ENCODE measurements at regions of chr10 and their contacts with region 1.

Region 1: GRCh38 chr10:70355051-70356021 is 27.1 kb downstream of the LRRC20 start:
- DNase-seq: peak; percentile 40
- ATAC-seq: peak; percentile 77
- H3K4me3 Mint-ChIP-seq: peak overlapping the region; percentile 64
- H3K27ac Mint-ChIP-seq: peak overlapping the region; percentile 73
- H3K4me1 Mint-ChIP-seq: peaks cover 20% of the 10 kb centered on the region
- H3K27me3 Mint-ChIP-seq: no peaks in the 10 kb centered on the region
- CTCF ChIP-seq: no peak

Region 2: GRCh38 chr10:70191972-70192305 is 163.4 kb before region 1 on chr10:
- CTCF ChIA-PET with region 1: no interaction called
- POLR2A ChIA-PET with region 1: no interaction called
- intact Hi-C with region 1: no loop called
- DNase-seq: no peak
- ATAC-seq: no peak
- H3K4me3 Mint-ChIP-seq: no peak overlapping the region
- H3K27ac Mint-ChIP-seq: no peak overlapping the region
- H3K4me1 Mint-ChIP-seq: peaks cover 1% of the 10 kb centered on the region
- H3K27me3 Mint-ChIP-seq: no peaks in the 10 kb centered on the region
- CTCF ChIP-seq: no peak

Region 3: GRCh38 chr10:70233109-70233938 is 122.0 kb before region 1 on chr10 and contains the start of gene PPA1:
- CTCF ChIA-PET with region 1: interaction called, 321 read pairs
- POLR2A ChIA-PET with region 1: interaction called, 11 read pairs
- intact Hi-C with region 1: no loop called
- DNase-seq: peak; percentile 99
- ATAC-seq: peak; percentile 94
- H3K4me3 Mint-ChIP-seq: peak within 1 kb of the TSS; percentile 80
- H3K27ac Mint-ChIP-seq: peak within 1 kb of the TSS; percentile 94
- H3K4me1 Mint-ChIP-seq: peaks cover 42% of the 10 kb centered on the region
- H3K27me3 Mint-ChIP-seq: no peaks in the 10 kb centered on the region
- CTCF ChIP-seq: no peak
- total RNA-seq, gene PPA1: 357 to 368 TPM

Region 4: GRCh38 chr10:70267161-70267933 is 88.0 kb before region 1 on chr10:
- CTCF ChIA-PET with region 1: interaction called, 15 read pairs
- POLR2A ChIA-PET with region 1: no interaction called
- intact Hi-C with region 1: no loop called
- DNase-seq: peak; percentile 35
- ATAC-seq: peak; percentile 28
- H3K4me3 Mint-ChIP-seq: no peak overlapping the region
- H3K27ac Mint-ChIP-seq: peak overlapping the region; percentile 10
- H3K4me1 Mint-ChIP-seq: peaks cover 10% of the 10 kb centered on the region
- H3K27me3 Mint-ChIP-seq: peaks cover 2% of the 10 kb centered on the region
- CTCF ChIP-seq: peak; percentile 46

Region 5: GRCh38 chr10:70286616-70287015 is 68.7 kb before region 1 on chr10:
- CTCF ChIA-PET with region 1: interaction called, 5 read pairs
- POLR2A ChIA-PET with region 1: no interaction called
- intact Hi-C with region 1: loop called (anchors 5 kb)
- DNase-seq: no peak
- ATAC-seq: no peak
- H3K4me3 Mint-ChIP-seq: no peak overlapping the region
- H3K27ac Mint-ChIP-seq: no peak overlapping the region
- H3K4me1 Mint-ChIP-seq: peaks cover 2% of the 10 kb centered on the region
- H3K27me3 Mint-ChIP-seq: peaks cover 46% of the 10 kb centered on the region
- CTCF ChIP-seq: no peak